ENCODE measurements at regions of chr1 and their contacts with region 1.

Region 1: DNA sequence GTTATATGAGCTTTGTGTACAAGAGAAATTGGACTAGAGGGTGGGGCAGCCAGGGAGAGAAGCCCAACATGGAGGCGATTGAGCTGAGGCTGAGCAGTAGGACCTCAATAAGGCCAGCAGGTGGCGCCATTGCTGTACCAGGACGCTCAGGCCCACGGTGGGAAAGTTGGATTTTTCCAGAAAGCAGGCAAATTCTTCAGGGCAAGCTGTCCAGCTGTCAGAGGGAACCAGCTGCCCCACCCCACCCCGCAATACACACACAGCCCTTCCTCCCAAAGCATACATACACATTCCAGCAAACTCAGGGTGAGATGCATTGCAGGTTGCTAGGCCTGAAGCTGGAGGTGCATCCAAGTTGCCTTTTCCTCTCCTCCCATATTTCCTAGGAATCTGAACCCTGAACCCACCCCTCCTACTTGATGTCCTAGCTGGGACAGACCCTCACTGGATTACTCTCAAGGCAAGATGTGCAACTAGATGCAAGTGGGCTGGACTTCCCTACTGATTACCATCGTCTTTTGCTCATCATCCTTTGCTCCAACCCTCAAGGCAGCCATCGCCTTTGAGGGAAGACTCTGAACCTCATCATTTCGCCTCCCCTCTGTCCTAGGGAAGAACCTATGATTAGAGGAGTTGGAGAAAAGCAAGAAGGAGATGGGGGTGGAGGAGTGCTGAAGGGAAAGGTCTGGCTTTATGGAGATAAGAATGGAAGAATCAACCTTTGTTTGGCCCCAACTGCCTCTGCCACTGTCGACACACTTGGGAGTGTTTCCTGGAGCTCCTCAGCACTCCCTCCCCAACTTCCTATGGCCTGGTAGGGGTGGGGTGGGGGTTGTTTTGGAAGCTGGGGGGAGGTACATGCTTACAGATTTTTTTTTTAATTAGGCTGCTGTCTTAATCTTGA is 25.5 kb downstream of the CD34 start:
- DNase-seq: peak; percentile 84 to 90
- ATAC-seq: peak; percentile 82 to 92 (median 90)
- H3K4me3 ChIP-seq: no peak overlapping the region
- H3K27ac ChIP-seq: peak overlapping the region in 9 of 10 donors; percentile 39 to 98 (median 85)
- H3K4me1 ChIP-seq: peaks cover 18 to 86% (median 79%) of the 10 kb centered on the region in 9 donors
- H3K27me3 ChIP-seq: no peaks in the 10 kb centered on the region
- CTCF ChIP-seq: peak; percentile 90 to 98 (median 97)

Region 2: DNA sequence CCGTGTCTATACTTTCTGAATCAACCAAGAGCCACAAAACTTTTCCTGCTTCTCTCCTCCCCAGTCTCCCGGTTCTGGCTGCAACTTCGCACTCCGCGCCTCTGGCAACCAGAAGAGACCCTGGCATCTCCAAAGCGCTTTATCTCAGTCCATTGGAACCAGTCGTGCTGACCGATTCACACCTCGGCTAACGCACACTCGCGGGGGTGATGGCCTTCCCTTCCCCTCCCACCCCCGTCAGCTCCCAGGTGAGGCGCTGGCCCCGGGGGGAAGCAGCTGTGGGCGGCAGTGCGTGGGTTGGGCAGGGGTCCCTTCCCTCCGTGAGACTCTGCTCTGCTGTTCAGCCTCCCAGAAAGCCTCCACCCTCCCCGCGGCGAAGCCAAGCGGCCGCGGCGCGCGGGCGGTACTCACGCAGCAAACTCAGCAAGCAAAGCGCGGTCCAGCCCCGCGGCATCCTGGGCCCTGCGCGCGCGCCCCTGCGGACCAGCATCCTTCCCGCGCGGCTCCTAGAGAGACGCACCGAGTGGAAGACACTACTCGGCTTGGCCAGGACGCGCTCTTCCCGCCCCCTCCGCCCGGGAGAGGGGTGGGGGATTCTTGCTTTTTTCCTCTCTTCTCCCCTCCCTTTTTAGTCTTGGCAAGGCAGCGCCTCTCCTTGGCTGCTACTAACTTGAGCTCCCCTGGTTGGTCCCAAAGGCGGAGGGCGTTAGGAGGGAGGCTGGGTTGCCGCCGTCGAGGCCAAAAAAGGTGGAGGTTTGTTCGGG is 25.4 kb after region 1 on chr1 and contains the start of gene CD34:
- intact Hi-C with region 1: loop called in 1 of 10 experiments (anchors 2 kb)
- DNase-seq: peak; percentile 78 to 80
- ATAC-seq: peak; percentile 60 to 80 (median 74)
- H3K4me3 ChIP-seq: peak within 1 kb of the TSS; percentile 48 to 85 (median 70)
- H3K27ac ChIP-seq: peak within 1 kb of the TSS; percentile 82 to 98 (median 92)
- H3K4me1 ChIP-seq: peaks cover 0 to 71% (median 41%) of the 10 kb centered on the region in 9 donors
- H3K27me3 ChIP-seq: peaks cover 0 to 42% (median 0%) of the 10 kb centered on the region in 7 donors
- CTCF ChIP-seq: no peak
- total RNA-seq, gene CD34: 44.7 to 97.0 (median 59.2) TPM

Region 3: DNA sequence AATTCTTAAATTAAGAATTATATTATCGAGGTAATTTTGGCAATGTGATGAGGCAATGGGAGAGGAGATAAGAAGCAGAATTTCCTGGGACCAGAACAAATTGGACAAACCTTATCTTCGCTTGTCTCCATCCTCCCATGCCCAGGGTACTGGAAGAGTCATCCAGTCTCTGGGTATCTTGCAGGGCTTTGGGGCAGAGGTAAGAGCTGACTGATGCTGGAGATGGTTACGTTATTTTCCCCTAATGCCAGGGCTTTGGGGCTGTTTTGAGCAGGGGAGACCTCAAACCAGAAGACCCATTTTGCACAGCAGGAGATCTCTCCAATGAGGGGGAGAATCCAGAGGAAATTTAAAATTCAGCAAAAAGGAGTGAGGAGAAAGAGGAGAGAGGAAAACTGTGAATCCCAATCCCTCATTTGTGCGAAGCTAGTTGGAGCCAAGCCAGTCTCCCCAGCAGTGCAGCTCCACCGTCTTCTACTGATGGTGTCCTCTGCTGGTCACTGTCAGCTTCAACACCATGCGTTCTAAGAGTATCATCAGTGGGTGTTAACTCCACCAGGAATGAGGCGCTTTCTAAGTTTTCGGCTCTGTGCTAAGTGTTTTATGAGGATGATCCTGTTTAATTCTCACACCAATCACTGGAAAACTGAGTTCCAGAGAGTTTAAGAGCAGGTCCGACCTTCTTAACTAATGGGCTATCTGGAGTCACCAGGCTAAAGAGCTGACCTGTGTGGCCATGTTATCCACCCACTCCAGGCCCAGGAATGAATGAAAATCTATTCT is 112.3 kb after region 1 on chr1:
- intact Hi-C with region 1: loop called in 2 of 10 experiments (anchors 1 to 10 kb)
- DNase-seq: peak; percentile 64 to 88
- ATAC-seq: peak; percentile 82 to 91 (median 85)
- H3K4me3 ChIP-seq: no peak overlapping the region
- H3K27ac ChIP-seq: no peak overlapping the region
- H3K4me1 ChIP-seq: peaks cover 0 to 8% (median 4%) of the 10 kb centered on the region in 9 donors
- H3K27me3 ChIP-seq: no peaks in the 10 kb centered on the region
- CTCF ChIP-seq: peak; percentile 75 to 93 (median 85)

Region 4: DNA sequence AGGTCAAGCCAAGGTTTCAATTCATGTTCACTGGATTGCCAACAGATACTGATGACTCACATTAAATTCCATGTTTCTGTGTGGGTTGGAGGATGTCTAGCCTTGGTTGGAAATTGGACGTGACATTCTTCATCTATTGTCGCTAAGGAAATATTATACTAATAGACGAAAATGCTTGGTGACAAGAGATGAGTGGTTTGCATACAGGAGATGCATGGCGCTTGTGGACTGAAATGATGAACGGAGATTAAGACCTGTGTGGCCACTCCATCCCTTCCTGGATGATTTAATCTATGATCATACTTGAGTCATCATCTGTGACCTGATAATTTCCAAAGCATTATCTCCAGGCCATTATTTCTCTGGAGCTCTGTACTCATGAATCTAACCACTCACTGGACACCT is 122.6 kb after region 1 on chr1:
- intact Hi-C with region 1: no loop called
- DNase-seq: no peak
- ATAC-seq: peak in 3 of 8 donors; percentile 31 to 40 (median 39)
- H3K4me3 ChIP-seq: no peak overlapping the region
- H3K27ac ChIP-seq: peak overlapping the region in 1 of 10 donors; percentile 36
- H3K4me1 ChIP-seq: peaks cover 0 to 9% (median 0%) of the 10 kb centered on the region in 9 donors
- H3K27me3 ChIP-seq: no peaks in the 10 kb centered on the region
- CTCF ChIP-seq: no peak

Measured in heart right ventricle (tissue), 16 donors.